Activated CD4-positive, alpha-beta T cell treated with anti-CD3 and anti-CD28 coated beads for 36 hours (primary cell): ENCODE measurements at regions of chrX and their contacts with region 1.

Region 1: DNA sequence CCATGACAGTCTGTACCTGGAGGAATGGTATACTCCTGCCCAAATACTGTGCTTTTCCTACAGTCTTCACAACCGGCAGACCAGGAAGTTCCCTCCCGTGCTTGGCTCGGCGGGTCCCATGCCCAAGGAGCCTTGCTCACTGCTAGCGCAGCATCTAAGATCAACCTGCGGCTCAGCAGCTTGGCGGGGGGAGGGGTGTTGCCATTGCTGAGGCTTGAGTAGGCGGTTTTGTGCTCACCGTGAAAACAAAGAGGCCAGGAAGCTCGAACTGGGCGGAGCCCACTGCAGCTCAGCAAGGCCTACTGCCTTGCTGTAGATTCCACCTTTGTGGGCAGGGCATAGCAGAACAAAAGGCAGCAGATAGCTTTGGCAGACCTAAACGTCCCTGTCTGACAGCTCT is 152.7 kb downstream of the TEX11 start:
- DNase-seq: peak; percentile 81
- ATAC-seq: peak; percentile 78
- H3K4me3 Mint-ChIP-seq: no peak overlapping the region
- H3K27ac Mint-ChIP-seq: peak overlapping the region; percentile 60
- H3K4me1 Mint-ChIP-seq: peaks cover 23% of the 10 kb centered on the region
- H3K27me3 Mint-ChIP-seq: no peaks in the 10 kb centered on the region

Region 2: GRCh38 chrX:69538321-69538876 is 1217.5 kb before region 1 on chrX:
- CTCF ChIA-PET with region 1: no interaction called
- POLR2A ChIA-PET with region 1: no interaction called
- intact Hi-C with region 1: no loop called
- DNase-seq: peak; percentile 83
- ATAC-seq: peak; percentile 96
- H3K4me3 Mint-ChIP-seq: no peak overlapping the region
- H3K27ac Mint-ChIP-seq: no peak overlapping the region
- H3K4me1 Mint-ChIP-seq: peaks cover 8% of the 10 kb centered on the region
- H3K27me3 Mint-ChIP-seq: peaks cover 9% of the 10 kb centered on the region

Region 3: GRCh38 chrX:70139736-70140135 is 616.1 kb before region 1 on chrX:
- CTCF ChIA-PET with region 1: no interaction called
- POLR2A ChIA-PET with region 1: no interaction called
- intact Hi-C with region 1: no loop called
- DNase-seq: no peak
- ATAC-seq: no peak
- H3K4me3 Mint-ChIP-seq: no peak overlapping the region
- H3K27ac Mint-ChIP-seq: no peak overlapping the region
- H3K4me1 Mint-ChIP-seq: peaks cover 19% of the 10 kb centered on the region
- H3K27me3 Mint-ChIP-seq: no peaks in the 10 kb centered on the region

Region 4: DNA sequence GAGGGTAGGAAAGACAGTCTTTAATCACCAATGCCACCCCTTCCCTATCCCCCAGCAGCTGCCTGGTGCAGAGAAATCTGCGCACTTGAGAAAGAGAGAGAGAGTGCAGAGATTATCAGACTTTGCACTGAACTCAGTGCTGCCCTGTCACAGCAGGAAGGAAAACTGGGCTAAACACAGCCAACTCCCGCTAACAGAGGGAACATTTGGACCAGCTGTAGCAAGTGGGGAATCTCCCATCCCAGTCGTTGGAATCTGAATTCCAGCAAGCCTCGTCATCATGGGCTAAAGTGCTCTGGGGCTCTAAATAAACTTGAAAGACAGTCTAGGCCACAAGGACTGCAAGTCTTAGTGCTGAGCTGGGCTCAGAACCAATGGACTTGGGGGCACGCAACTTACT is 142.6 kb before region 1 on chrX:
- CTCF ChIA-PET with region 1: no interaction called
- POLR2A ChIA-PET with region 1: no interaction called
- intact Hi-C with region 1: no loop called
- DNase-seq: no peak
- ATAC-seq: no peak
- H3K4me3 Mint-ChIP-seq: no peak overlapping the region
- H3K27ac Mint-ChIP-seq: no peak overlapping the region
- H3K4me1 Mint-ChIP-seq: peaks cover 2% of the 10 kb centered on the region
- H3K27me3 Mint-ChIP-seq: peaks cover 7% of the 10 kb centered on the region

Region 5: GRCh38 chrX:70694339-70695122 is 61.3 kb before region 1 on chrX:
- CTCF ChIA-PET with region 1: no interaction called
- POLR2A ChIA-PET with region 1: no interaction called
- intact Hi-C with region 1: loop called in 1 of 2 experiments (anchors 5 kb)
- DNase-seq: no peak
- ATAC-seq: peak; percentile 75
- H3K4me3 Mint-ChIP-seq: no peak overlapping the region
- H3K27ac Mint-ChIP-seq: no peak overlapping the region
- H3K4me1 Mint-ChIP-seq: peaks cover 10% of the 10 kb centered on the region
- H3K27me3 Mint-ChIP-seq: no peaks in the 10 kb centered on the region